ENCODE measurements at regions of chr2 and their contacts with region 1.

Region 1: GRCh38 chr2:216498418-216499413 is at the start of gene RPL37A:
- DNase-seq: peak; percentile 94 to 97 (median 96)
- H3K4me3 ChIP-seq: peak within 1 kb of the TSS; percentile 81 to 99 (median 93)
- H3K27ac ChIP-seq: peak within 1 kb of the TSS; percentile 94 to 97
- H3K4me1 ChIP-seq: peaks cover 12 to 54% (median 43%) of the 10 kb centered on the region in 4 experiments
- H3K27me3 ChIP-seq: no peaks in the 10 kb centered on the region

Region 2: DNA sequence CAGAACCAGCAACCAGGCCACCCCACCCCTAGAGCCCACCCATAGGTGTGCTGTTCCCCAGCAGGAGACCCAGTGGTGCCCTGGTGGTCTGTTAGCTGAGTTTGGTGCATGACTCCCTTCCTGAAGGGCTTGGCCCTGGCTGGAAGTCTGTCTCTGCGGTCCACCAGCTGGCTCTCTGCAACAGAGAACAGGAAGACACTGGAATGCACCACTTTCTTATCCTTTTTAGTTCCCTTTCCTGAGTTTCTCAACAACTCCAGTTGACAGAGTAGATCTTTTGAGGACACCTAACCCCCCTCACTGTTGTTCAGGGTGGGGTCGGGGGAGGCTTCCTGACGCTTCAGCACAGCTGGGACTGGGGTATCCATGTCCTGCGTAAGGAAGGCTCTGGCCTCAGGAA is 12.0 kb before region 1 on chr2:
- CTCF ChIA-PET with region 1: interaction called, 16 read pairs
- POLR2A ChIA-PET with region 1: no interaction called
- DNase-seq: peak in 2 of 3 donors; percentile 61 to 66
- H3K4me3 ChIP-seq: peak overlapping the region in 1 of 7 experiments; percentile 32
- H3K27ac ChIP-seq: no peak overlapping the region
- H3K4me1 ChIP-seq: peaks cover 0 to 45% (median 23%) of the 10 kb centered on the region in 4 experiments
- H3K27me3 ChIP-seq: no peaks in the 10 kb centered on the region

Measured in common myeloid progenitor, CD34-positive (primary cell).